Vagina (tissue), 2 donors: ENCODE measurements at regions of chr15 and their contacts with region 1.

Region 1: DNA sequence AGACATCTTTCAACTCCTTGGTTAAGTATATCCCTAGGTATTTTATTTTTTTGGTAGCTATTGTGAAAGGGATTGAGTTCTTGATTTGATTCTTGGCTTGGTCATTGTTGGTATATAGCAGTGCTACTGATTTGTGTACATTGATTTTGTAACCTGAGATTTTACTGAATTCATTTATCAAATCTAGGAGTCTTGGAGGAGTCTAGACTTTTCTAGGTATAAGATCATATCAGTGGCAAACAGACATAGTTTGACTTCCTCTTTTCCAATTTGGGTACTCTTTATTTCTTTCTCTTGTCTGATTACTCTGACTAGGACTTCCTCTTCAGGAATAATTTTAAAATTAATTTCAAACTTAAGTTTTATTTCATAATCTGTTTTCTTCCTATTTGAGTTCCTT is 125.2 kb downstream of the OCA2 start:
- DNase-seq: no peak
- H3K4me3 ChIP-seq: no peak overlapping the region
- H3K27ac ChIP-seq: no peak overlapping the region
- H3K4me1 ChIP-seq: no peaks in the 10 kb centered on the region
- H3K27me3 ChIP-seq: no peaks in the 10 kb centered on the region
- CTCF ChIP-seq: no peak
- POLR2A ChIP-seq: no peak

Region 2: DNA sequence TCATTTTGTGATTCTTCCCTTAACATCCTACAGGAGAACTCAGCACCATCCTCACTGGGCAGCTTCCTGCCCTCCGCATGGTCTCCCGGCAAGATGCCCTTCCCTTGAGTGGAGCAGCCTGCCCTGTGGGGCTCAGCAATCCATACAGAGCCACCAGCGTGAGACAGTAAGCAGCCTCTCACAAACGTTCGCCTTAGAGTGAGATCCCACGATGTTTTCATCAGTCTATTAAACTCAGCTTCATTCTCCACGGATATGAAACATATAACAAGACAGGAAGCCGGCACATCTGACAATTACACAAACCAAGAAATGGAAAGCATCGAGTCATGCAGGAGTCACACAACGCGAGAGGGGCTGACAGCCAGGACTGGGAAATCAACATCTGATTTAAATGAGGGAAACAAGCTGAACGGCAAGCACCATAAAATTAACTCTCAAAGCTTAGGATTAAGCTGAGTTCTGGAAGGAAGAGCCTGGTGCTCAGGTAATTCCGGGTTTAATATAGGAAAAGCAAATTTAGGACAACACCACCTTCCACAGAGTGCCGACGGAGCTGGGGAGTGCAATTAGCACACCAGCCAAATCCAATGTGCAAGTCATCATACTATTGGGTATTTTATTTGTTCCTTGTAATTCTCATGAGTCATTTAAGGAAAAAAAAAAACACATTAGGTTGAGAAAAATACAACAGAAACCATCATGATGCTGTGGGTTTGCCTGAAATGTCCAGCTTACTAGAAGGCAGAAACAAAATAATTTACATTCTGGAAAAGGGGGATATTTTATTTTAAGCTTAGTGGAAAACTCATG is 146.8 kb before region 1 on chr15:
- intact Hi-C with region 1: no loop called
- DNase-seq: peak in 1 of 2 donors; percentile 64
- H3K4me3 ChIP-seq: peak overlapping the region in 1 of 2 donors; percentile 5
- H3K27ac ChIP-seq: no peak overlapping the region
- H3K4me1 ChIP-seq: peaks cover 9% of the 10 kb centered on the region
- H3K27me3 ChIP-seq: no peaks in the 10 kb centered on the region
- CTCF ChIP-seq: no peak
- POLR2A ChIP-seq: no peak

Region 3: DNA sequence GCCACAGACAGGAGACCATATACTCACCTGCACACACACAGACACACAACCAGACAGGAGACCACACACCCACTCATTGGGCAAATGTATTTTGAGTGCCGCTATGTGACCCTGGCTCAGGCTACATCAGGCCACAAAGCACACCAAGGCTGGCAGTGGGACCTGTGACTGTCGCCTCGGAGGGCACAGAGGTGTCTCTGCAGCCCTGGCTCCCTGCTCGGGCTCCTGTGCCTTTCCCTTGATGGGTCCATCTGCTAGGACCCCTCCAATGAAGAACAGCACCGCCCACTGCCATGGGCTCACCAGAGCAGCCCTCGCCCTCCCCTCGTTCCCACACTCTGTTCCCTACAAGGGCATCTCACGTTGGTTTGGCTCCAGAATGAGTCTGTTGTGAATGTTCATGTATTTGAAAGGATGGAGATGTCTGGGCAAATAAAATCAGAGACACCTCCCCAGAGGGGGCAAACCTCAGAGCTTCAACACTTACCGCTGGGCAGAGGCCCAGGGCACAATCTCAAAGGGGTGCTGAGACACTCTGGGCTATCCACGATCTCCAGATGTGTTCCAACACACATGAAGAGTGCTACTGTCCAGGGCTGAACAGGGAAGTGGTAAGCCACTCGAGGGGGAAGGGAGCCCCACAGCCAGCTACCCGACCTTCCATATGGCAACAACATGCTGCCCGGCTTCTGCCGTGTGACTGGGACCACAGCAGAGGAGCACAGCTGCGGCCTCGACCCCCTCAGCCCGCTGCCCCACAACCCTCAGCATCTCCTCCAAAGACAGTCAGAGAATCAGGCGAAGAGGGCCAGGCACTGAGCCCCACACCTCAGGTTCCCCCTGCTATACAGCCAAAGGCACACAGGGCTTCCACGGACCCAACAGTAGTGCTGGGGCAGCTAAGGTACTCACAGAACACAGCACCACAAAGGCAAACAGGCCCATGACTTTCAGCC is 50.3 kb after region 1 on chr15:
- intact Hi-C with region 1: loop called (anchors 2 kb)
- DNase-seq: peak in 1 of 2 donors; percentile 82
- H3K4me3 ChIP-seq: no peak overlapping the region
- H3K27ac ChIP-seq: no peak overlapping the region
- H3K4me1 ChIP-seq: no peaks in the 10 kb centered on the region
- H3K27me3 ChIP-seq: no peaks in the 10 kb centered on the region
- CTCF ChIP-seq: no peak
- POLR2A ChIP-seq: no peak